CD8-positive, alpha-beta T cell (primary cell): ENCODE measurements at regions of chr12 and their contacts with region 1.

Region 1: GRCh38 chr12:1939801-1940607 is 21.6 kb upstream of the CACNA2D4 start:
- DNase-seq: peak; percentile 81 to 96 (median 90)
- ATAC-seq: peak; percentile 100
- H3K4me3 ChIP-seq: no peak overlapping the region
- H3K4me3 Mint-ChIP-seq: no peak overlapping the region
- H3K27ac ChIP-seq: no peak overlapping the region
- H3K27ac Mint-ChIP-seq: no peak overlapping the region
- H3K4me1 ChIP-seq: peaks cover 5% of the 10 kb centered on the region
- H3K4me1 Mint-ChIP-seq: peaks cover 4% of the 10 kb centered on the region
- H3K27me3 ChIP-seq: no peaks in the 10 kb centered on the region
- H3K27me3 Mint-ChIP-seq: no peaks in the 10 kb centered on the region
- CTCF ChIP-seq: peak; percentile 92

Region 2: DNA sequence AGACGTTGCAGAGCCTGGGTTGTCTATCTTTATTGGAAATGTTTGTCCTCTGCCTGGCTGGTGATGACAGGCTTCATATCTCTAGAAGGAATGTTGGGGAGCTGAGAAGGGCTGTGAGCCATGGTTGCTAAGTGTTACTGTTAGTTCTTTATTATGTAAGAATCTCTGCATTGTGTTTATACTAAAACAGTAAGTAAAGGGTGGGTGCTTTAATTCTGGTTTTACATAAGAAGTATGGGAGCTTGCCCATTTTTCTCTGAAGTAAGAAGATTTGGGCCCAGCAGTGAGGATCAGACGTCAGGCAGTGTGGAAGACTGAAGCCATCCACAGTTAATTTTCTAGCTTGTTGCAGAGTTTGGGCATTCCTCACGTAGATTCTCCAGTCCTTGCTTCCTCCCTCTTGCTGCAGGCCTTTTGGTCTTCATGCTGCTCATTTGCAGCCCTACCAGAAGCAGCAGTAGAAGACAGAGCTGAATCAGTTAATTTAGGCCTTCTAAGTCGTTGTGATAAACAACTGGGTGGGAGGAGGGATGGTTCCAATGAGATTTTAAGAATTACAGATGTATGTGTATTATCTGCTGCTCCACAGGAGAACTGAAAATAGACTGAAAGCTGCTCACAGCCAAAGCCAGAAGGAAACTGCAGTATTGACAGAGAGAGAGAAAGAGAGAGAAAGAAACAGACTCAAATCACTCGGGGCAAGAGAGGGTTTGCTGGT is 289.6 kb before region 1 on chr12:
- CTCF ChIA-PET with region 1: interaction called, 136 read pairs
- POLR2A ChIA-PET with region 1: interaction called, 5 read pairs
- intact Hi-C with region 1: loop called (anchors 1 kb)
- DNase-seq: peak in 1 of 9 experiments; percentile 0
- ATAC-seq: no peak
- H3K4me3 ChIP-seq: no peak overlapping the region
- H3K4me3 Mint-ChIP-seq: no peak overlapping the region
- H3K27ac ChIP-seq: no peak overlapping the region
- H3K27ac Mint-ChIP-seq: no peak overlapping the region
- H3K4me1 ChIP-seq: no peaks in the 10 kb centered on the region
- H3K4me1 Mint-ChIP-seq: peaks cover 3% of the 10 kb centered on the region
- H3K27me3 ChIP-seq: no peaks in the 10 kb centered on the region
- H3K27me3 Mint-ChIP-seq: peaks cover 13% of the 10 kb centered on the region
- CTCF ChIP-seq: no peak

Region 3: DNA sequence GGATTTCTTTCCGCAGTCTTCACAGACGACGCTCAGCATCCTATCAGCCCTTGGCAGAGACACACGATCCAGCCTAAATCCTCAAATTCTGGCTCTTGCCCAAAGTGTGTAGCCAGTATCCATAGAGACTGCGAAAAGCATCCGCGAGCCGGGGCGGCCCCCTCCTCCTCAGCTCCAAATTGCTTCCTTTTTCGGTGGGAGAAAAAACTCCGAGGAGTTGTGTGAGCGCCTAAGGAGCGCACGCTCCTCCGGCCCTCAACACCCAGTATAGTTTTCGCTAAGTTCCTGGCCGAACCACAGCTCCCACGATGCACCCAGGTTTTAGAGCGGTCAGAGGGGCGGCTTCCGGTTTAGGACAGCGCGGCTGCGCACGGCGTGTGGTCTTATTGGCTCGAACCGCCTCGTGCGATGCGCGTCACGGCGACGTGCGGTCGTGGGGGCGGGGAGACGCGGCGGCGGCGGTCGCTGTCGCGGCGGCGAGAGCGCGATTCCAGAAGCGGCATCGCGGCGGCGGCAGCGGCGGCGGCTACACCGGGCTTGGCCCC is 249.4 kb before region 1 on chr12 and contains the start of gene ADIPOR2:
- CTCF ChIA-PET with region 1: interaction called, 3 read pairs
- POLR2A ChIA-PET with region 1: no interaction called
- intact Hi-C with region 1: loop called in 1 of 2 experiments (anchors 1 kb)
- DNase-seq: peak; percentile 88 to 98 (median 94)
- ATAC-seq: peak; percentile 97
- H3K4me3 ChIP-seq: peak within 1 kb of the TSS; percentile 84 to 91
- H3K4me3 Mint-ChIP-seq: peak within 1 kb of the TSS; percentile 92
- H3K27ac ChIP-seq: peak within 1 kb of the TSS; percentile 73 to 94
- H3K27ac Mint-ChIP-seq: peak within 1 kb of the TSS; percentile 99
- H3K4me1 ChIP-seq: peaks cover 20% of the 10 kb centered on the region
- H3K4me1 Mint-ChIP-seq: peaks cover 46% of the 10 kb centered on the region
- H3K27me3 ChIP-seq: no peaks in the 10 kb centered on the region
- H3K27me3 Mint-ChIP-seq: no peaks in the 10 kb centered on the region
- CTCF ChIP-seq: no peak
- total RNA-seq, gene ADIPOR2: 19.4 to 22.5 TPM

Region 4: GRCh38 chr12:1812650-1813302 is 127.2 kb before region 1 on chr12:
- CTCF ChIA-PET with region 1: interaction called, 18 read pairs
- POLR2A ChIA-PET with region 1: no interaction called
- intact Hi-C with region 1: no loop called
- DNase-seq: peak in 2 of 9 experiments; percentile 15 to 40
- ATAC-seq: no peak
- H3K4me3 ChIP-seq: no peak overlapping the region
- H3K4me3 Mint-ChIP-seq: no peak overlapping the region
- H3K27ac ChIP-seq: no peak overlapping the region
- H3K27ac Mint-ChIP-seq: no peak overlapping the region
- H3K4me1 ChIP-seq: no peaks in the 10 kb centered on the region
- H3K4me1 Mint-ChIP-seq: peaks cover 7% of the 10 kb centered on the region
- H3K27me3 ChIP-seq: no peaks in the 10 kb centered on the region
- H3K27me3 Mint-ChIP-seq: peaks cover 9% of the 10 kb centered on the region
- CTCF ChIP-seq: no peak

Region 5: DNA sequence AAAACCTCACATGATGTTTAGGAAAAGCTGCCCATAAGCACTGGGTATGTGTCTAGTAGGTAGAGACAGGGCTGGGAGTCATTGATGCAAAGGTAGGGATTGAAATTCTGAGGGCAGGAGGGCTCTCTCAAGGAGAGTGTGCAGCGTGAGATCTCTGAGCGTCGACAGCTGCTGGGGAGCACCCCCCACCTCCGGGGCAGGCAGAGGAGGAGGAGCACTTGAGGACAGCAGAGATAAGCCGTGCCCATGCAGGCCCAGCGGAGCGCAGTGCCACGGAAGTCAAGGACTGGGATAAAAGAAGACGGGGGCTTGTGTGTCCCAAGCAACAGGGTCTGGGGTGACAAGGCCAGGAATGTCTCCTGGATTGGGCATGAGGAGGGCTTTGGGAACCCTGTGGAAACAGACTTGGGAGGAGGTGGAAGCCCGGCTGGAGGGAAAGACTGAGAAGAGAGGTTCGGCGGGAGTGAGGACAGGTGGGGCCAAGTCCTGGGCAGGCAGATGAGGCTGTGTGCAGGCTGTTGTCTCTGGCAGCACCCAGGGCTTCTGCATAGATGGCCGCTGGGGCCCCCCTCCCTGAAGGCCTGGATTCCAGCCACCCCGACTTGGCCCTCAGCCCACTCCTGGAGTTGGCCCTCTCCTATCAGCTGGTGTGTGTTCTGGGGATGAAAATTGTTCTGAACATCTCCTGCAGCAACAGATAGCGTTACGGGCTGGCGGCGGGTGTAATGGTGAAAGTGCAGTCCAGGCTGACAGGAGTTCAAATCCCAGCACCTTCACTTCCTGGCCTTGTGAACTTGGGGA is 23.4 kb before region 1 on chr12:
- CTCF ChIA-PET with region 1: interaction called, 20 read pairs
- POLR2A ChIA-PET with region 1: interaction called, 3 read pairs
- intact Hi-C with region 1: no loop called
- DNase-seq: peak in 2 of 9 experiments; percentile 6 to 34
- ATAC-seq: no peak
- H3K4me3 ChIP-seq: no peak overlapping the region
- H3K4me3 Mint-ChIP-seq: no peak overlapping the region
- H3K27ac ChIP-seq: peak overlapping the region in 1 of 2 experiments; percentile 36
- H3K27ac Mint-ChIP-seq: no peak overlapping the region
- H3K4me1 ChIP-seq: peaks cover 28% of the 10 kb centered on the region
- H3K4me1 Mint-ChIP-seq: peaks cover 21% of the 10 kb centered on the region
- H3K27me3 ChIP-seq: no peaks in the 10 kb centered on the region
- H3K27me3 Mint-ChIP-seq: peaks cover 5% of the 10 kb centered on the region
- CTCF ChIP-seq: no peak

Region 6: DNA sequence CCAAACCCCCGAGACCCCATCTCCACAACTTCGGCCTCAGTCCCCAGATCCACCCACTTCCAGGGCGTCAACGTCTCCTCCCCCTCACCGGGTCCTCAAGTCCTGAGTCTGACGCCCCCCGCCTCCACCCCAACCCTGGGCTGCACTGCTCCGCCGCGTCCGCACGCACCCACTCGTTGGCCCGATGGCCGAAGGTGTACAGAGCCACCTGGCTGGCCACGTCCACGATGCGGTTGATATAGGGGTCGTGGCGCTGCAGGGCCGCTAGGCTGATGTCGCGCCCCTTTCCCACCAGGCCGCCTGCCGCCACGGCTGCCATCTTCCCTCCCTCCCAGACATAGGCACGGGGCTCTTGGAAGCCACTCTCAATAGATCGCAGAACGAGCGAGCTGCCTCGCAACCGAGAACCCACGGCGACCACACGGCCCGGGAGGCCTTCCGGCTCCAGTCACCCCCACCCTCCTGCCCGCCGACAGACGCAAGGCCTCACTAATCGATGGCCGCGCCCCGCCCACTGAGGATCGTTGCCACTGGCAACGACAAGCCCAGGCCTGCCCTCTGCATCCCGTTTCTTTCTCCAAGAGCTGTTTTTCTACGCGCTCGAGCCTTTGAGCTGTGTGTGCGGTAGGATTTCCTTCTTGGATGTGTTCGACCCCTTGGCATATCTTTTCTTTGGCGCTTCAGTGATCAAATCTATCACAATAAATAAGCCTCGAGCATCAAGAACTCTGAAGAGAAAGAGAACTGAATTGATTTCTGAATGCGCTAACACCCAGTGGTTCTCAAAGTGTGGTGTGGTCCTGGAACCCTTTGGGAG is 64.3 kb after region 1 on chr12 and contains the start of gene DCP1B:
- CTCF ChIA-PET with region 1: interaction called, 5 read pairs
- POLR2A ChIA-PET with region 1: interaction called, 4 read pairs
- intact Hi-C with region 1: loop called in 1 of 2 experiments (anchors 2 kb)
- DNase-seq: peak; percentile 83 to 98 (median 92)
- ATAC-seq: peak; percentile 94
- H3K4me3 ChIP-seq: peak within 1 kb of the TSS; percentile 65 to 99
- H3K4me3 Mint-ChIP-seq: peak within 1 kb of the TSS; percentile 98
- H3K27ac ChIP-seq: peak within 1 kb of the TSS; percentile 71 to 92
- H3K27ac Mint-ChIP-seq: peak within 1 kb of the TSS; percentile 99
- H3K4me1 ChIP-seq: peaks cover 19% of the 10 kb centered on the region
- H3K4me1 Mint-ChIP-seq: peaks cover 37% of the 10 kb centered on the region
- H3K27me3 ChIP-seq: peaks cover 0 to 2% of the 10 kb centered on the region in 2 experiments
- H3K27me3 Mint-ChIP-seq: no peaks in the 10 kb centered on the region
- CTCF ChIP-seq: no peak
- total RNA-seq, gene DCP1B: 3.0 TPM